Head of caudate nucleus (tissue), 42 donors: ENCODE measurements at regions of chr11 and their contacts with region 1.

Region 1: DNA sequence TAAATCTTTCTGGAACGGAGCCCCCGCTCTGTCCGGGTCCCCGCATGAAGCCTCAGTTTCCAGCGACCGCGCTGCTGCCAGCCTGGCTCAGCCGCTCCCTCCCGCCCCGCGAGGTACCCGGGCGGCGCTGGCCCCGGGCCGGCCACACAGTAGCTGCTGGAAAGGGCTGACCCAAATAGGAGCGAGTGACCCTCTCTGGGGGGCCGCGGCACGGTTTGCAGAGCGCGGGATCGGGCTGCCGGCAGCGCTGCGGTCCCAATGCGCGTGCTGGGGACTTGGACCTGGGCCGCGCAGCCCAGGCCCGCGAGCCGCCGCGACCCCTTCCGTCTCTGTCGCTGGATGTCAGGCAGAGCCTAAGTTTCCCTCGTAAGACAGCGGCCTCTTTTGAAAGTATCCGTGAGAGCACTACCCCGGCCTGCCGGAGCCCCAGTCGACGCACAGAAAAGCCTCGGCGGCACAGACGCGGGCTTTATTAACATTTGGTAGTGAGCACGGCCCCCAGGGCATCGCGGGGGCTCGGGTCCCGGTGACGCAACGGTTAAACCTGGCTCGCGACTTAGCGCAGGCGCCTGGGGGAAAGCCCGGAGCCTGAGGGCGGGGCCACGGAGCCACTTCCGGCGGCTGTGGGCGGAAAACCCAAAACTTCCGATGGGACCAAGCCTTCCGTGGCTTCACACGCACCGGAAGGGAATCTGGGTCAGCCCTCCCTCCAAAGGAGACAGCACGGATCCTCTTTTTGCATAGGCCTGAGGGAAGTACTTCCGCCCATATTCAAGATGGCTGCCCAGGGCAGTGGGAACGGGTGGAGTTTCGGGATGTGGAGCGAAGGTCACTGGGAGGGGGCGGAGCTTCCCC is 14.9 kb downstream of the BAD start:
- DNase-seq: peak; percentile 98 to 100 (median 99)

Region 2: DNA sequence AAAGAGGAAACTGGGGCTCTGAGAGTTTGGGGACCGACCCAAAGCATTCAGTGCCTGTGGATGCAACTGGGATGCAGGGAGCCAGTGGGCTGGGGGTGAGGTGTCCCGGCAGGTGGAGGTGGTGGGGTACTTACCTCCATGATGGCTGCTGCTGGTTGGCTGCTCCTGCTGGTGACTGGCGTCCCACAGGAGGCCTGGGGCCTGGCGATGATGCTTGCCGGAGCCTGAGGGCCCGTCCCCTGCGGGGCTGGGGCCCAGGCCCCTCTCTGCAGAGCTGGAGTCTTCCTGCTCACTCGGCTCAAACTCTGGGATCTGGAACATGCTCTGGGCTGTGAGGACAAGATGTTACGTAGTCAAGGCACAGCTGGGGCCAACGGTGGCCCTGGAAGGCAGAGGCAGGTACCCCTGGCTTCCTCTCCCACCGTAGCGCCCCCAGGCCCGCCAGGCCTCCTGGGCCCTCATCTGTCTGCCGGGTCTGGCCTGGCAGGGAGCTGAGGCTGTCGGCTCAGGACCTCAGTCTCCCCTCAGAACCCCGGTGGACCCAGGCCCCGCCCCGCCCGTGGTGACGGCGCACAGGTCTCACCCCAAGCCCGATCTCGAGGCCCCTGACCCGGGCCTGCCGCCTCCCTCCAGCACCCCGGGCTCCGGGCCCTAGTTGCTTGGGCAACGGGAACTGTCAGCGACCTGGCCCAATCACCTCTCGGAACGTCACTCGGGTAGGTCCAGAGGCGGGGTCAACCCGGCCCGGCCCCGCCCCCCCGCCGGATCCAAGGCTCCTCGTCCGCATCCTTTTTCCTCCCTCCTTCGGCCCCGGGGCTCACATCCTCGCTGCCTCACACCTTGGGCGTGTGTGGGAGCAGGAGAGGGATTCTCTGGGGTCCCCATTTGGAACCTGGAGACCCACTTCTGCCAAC is 14.7 kb after region 1 on chr11 and contains the start of gene BAD:
- intact Hi-C with region 1: loop called (anchors 2 kb)
- DNase-seq: peak; percentile 97 to 99 (median 98)

Region 3: DNA sequence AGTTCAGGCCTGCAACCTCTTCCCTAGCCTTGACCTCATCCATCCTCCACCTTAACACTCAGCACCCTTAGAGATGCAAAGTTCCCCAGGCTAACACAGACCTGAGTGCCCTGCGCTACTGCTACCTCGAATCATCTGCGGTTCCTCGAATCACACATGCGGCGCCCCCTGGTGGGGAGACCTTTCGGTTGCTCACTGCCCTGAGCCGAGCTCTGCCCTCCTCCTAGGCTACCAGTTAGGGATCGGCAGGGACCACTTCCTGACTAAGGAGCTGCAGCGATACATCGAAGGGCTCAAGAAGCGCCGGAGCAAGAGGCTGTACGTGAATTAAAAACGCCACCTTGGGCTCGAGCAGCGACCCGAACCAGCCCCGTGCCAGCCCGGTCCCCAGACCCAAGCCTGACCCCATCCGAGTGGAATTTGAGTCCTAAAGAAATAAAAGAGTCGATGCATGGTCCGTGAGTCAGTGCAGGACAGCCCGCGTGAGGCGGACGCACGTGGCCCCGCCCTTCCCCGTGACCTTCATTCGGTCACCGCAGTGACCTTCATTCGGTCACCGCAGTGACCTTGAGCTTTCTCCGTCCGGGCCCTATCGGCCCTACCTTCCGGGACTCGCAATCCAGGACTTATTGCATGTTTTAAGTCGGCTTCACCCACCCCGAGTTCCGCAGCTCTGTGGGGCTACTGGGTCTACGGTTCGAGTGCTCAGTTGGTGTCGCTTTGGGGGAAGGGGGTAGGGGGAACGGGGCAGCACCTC is 34.9 kb after region 1 on chr11:
- intact Hi-C with region 1: loop called (anchors 2 kb)
- DNase-seq: peak; percentile 91 to 99 (median 96)